Caco-2 (cell line): ENCODE measurements at regions of chr7 and their contacts with region 1.

Region 1: DNA sequence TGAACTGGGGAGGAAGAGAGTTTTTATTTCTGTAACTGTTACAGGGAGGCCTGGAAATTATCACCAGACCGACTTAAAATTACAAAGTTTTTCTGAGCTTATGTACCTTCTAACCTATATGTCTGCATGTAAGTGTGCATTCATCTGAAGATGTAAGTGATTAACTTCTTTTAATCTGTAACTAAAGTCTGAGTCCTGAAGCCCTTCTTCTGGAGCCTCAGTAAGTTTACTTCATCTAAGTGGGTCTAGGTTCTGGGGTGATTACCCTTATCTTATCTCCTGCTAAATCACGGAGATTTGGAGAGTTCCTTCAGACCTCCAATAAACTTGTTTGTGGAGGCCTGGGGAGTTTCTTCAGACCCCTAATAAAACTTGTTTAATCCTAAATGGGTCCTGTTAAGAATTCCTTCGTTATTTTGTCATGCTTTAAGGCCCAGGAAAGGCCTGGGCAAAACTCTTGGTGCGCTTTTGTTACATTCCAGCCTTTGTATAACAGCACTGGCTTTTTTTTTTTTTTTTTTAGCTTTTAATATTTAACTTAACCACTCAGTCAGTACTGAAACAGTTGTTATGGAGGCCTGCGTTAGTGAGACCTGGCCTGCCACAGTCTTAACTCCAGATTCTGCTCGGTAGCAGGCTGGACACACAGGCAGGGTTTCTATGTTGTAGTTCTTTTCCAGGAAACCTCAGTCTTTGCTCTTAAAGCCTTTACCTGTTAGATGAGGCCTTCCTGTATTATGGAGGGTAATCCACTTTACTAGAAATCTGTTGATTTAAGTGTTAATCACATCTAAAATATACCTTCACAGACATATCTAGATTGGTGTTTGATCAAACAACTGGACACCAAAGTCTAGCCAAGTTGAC is 33.0 kb downstream of the TPST1 start:
- DNase-seq: peak; percentile 78 to 87
- H3K4me3 ChIP-seq: no peak overlapping the region
- H3K4me3 Mint-ChIP-seq: peak overlapping the region; percentile 56
- H3K27ac Mint-ChIP-seq: peak overlapping the region; percentile 71
- H3K4me1 ChIP-seq: peaks cover 49% of the 10 kb centered on the region
- H3K4me1 Mint-ChIP-seq: peaks cover 45% of the 10 kb centered on the region
- H3K27me3 ChIP-seq: no peaks in the 10 kb centered on the region
- H3K27me3 Mint-ChIP-seq: no peaks in the 10 kb centered on the region
- CTCF ChIP-seq: no peak

Region 2: GRCh38 chr7:66152371-66153191 is 85.6 kb before region 1 on chr7:
- CTCF ChIA-PET with region 1: no interaction called
- POLR2A ChIA-PET with region 1: no interaction called
- intact Hi-C with region 1: no loop called
- DNase-seq: no peak
- H3K4me3 ChIP-seq: no peak overlapping the region
- H3K4me3 Mint-ChIP-seq: no peak overlapping the region
- H3K27ac Mint-ChIP-seq: no peak overlapping the region
- H3K4me1 ChIP-seq: peaks cover 5% of the 10 kb centered on the region; the same call in 1 of the 2 replicates
- H3K4me1 Mint-ChIP-seq: no peaks in the 10 kb centered on the region
- H3K27me3 ChIP-seq: no peaks in the 10 kb centered on the region
- H3K27me3 Mint-ChIP-seq: no peaks in the 10 kb centered on the region
- CTCF ChIP-seq: no peak

Region 3: DNA sequence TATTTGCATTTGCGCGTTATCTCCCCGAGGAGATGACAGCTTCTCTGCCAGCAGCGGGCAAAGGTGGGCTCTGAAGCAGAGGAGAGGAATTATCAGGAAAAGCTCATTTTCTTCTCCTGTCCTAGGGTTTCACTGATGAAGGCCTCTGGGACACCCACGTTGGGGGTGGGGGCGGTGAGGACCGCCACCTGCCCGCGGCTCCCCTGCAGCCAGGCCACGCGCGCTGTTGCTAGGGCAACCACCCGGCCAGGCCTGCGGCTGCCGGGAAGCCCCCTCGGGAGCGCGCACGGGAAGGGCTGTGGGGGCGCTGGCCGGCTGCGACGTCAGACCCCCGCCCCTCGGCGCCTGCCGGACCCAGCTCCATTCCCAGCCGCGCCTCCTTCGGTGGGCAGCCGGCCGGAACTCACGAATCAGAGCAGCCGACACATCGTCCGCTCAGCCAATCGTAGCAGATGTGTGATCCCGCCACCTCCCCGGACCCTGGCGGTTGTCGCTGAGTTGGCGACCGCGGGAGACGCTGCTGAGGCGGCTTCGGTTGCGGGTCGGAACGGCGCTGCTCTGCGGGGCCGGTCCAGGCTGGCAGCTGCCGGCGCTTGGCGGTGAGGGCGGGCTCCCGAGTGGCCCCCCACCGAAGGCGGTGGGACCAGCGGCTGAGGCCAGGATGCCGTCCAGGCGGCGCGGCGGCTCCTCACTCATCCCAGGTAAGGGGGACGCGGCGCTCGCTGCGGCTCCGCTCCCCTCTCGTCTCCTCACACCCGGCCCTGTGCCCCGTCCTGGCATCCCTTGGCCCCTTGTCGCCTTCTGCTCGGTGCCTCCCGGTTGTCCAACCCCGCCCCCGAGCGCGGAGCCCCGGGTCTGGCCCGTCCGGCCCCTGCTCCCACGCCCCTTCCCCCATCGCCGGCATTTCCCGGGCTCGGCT is 33.1 kb before region 1 on chr7 and contains the start of gene TPST1:
- CTCF ChIA-PET with region 1: interaction called, 6 read pairs
- POLR2A ChIA-PET with region 1: interaction called, 13 read pairs
- intact Hi-C with region 1: loop called (anchors 2 kb)
- DNase-seq: peak; percentile 92 to 97
- H3K4me3 ChIP-seq: peak within 1 kb of the TSS; percentile 89
- H3K4me3 Mint-ChIP-seq: peak within 1 kb of the TSS; percentile 80
- H3K27ac Mint-ChIP-seq: peak within 1 kb of the TSS; percentile 75
- H3K4me1 ChIP-seq: peaks cover 5% of the 10 kb centered on the region
- H3K4me1 Mint-ChIP-seq: peaks cover 12% of the 10 kb centered on the region
- H3K27me3 ChIP-seq: no peaks in the 10 kb centered on the region
- H3K27me3 Mint-ChIP-seq: no peaks in the 10 kb centered on the region
- CTCF ChIP-seq: peak; percentile 48 to 80
- total RNA-seq, gene TPST1: 31.0 and 32.8 TPM in 2 replicates

Region 4: GRCh38 chr7:66281678-66282590 is 43.8 kb after region 1 on chr7:
- CTCF ChIA-PET with region 1: interaction called, 3 read pairs
- POLR2A ChIA-PET with region 1: no interaction called
- intact Hi-C with region 1: loop called (anchors 5 kb)
- DNase-seq: no peak
- H3K4me3 ChIP-seq: no peak overlapping the region
- H3K4me3 Mint-ChIP-seq: no peak overlapping the region
- H3K27ac Mint-ChIP-seq: peak overlapping the region; percentile 75
- H3K4me1 ChIP-seq: no peaks in the 10 kb centered on the region
- H3K4me1 Mint-ChIP-seq: peaks cover 24% of the 10 kb centered on the region
- H3K27me3 ChIP-seq: no peaks in the 10 kb centered on the region
- H3K27me3 Mint-ChIP-seq: no peaks in the 10 kb centered on the region
- CTCF ChIP-seq: no peak

Region 5: DNA sequence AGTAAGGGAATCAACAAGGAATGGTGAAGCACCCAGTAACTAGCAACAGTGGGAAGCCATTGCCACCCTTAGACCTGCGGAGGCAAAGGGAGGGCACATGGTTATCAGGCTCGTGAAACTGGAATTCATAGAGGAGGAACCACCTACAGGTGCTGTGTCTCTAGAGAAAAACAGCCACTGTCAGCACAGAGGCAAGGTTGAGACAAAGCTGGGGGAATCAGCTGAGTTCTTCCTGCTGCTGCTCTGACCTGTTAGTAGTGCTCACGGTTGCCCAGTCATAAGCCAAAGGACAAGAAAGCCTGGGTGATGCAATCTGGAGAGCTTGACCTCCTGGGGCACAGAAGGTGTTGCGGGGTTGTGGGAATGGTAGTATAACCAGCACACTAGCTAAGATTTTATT is 77.1 kb after region 1 on chr7:
- CTCF ChIA-PET with region 1: no interaction called
- POLR2A ChIA-PET with region 1: no interaction called
- intact Hi-C with region 1: loop called (anchors 1 kb)
- DNase-seq: no peak
- H3K4me3 ChIP-seq: no peak overlapping the region
- H3K4me3 Mint-ChIP-seq: no peak overlapping the region
- H3K27ac Mint-ChIP-seq: peak overlapping the region; percentile 7
- H3K4me1 ChIP-seq: peaks cover 3% of the 10 kb centered on the region; the same call in 1 of the 2 replicates
- H3K4me1 Mint-ChIP-seq: peaks cover 10% of the 10 kb centered on the region
- H3K27me3 ChIP-seq: no peaks in the 10 kb centered on the region
- H3K27me3 Mint-ChIP-seq: no peaks in the 10 kb centered on the region
- CTCF ChIP-seq: no peak

Region 6: GRCh38 chr7:66326501-66327180 is 88.5 kb after region 1 on chr7:
- CTCF ChIA-PET with region 1: no interaction called
- POLR2A ChIA-PET with region 1: no interaction called
- intact Hi-C with region 1: loop called (anchors 1 kb)
- DNase-seq: peak; percentile 25 to 45
- H3K4me3 ChIP-seq: no peak overlapping the region
- H3K4me3 Mint-ChIP-seq: peak overlapping the region; percentile 0
- H3K27ac Mint-ChIP-seq: no peak overlapping the region
- H3K4me1 ChIP-seq: peaks cover 14% of the 10 kb centered on the region
- H3K4me1 Mint-ChIP-seq: peaks cover 25% of the 10 kb centered on the region
- H3K27me3 ChIP-seq: no peaks in the 10 kb centered on the region
- H3K27me3 Mint-ChIP-seq: no peaks in the 10 kb centered on the region
- CTCF ChIP-seq: no peak